HCT116 (cell line): ENCODE measurements at regions of chr7 and their contacts with region 1.

Region 1: DNA sequence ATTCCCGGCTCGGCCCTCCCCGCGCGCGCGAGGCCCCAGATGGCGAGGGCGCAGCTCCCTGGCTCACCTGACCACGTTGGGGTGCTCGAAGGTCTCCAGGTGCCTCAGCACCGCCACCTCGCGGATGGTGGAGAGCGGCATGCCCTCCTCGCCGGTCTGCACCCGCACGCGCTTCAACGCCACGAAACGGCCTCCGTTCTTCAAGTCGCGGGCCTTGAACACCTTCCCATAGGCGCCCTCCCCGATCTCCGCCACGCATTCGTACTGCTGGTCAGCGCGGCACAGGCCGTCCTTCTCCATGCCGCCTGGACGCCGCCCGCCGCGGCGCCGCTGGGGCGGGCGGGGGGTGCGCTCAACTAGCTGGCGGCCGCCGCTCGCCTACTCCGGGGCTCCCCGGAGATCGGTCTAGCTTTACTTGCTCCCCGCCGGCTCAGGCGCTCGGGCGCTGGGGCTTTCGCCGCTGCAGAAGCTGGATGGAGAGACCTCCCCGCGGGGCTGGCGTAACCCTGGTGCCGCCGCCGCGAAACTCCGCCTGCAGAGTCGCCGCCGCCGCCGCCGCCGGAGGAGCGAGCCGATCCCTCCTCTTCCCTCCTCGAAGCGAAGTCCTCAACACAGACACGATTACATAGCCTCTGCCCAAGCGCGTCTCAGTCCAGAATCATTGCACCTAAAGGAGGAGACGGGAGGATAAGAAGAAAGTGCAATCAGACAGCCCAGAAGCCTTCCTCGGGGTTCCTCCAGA is 3.2 kb downstream of the CDK6 start:
- DNase-seq: peak; percentile 70
- ATAC-seq: peak; percentile 67
- H3K4me3 ChIP-seq: peak overlapping the region; percentile 65 to 77
- H3K27ac ChIP-seq: peak overlapping the region; percentile 87
- H3K4me1 ChIP-seq: peaks cover 12 to 43% of the 10 kb centered on the region in 2 experiments
- H3K27me3 ChIP-seq: no peaks in the 10 kb centered on the region
- CTCF ChIP-seq: peak; percentile 74 to 87 (median 81)
- POLR2A ChIP-seq: no peak
- RAD21 ChIP-seq: peak; percentile 91

Region 2: GRCh38 chr7:92528188-92528957 is 304.8 kb before region 1 on chr7 and contains the starts of genes PEX1 and RBM48:
- CTCF ChIA-PET with region 1: no interaction called
- POLR2A ChIA-PET with region 1: no interaction called
- RAD21 ChIA-PET with region 1: no interaction called
- intact Hi-C with region 1: loop called (anchors 5 kb)
- DNase-seq: peak; percentile 99
- ATAC-seq: peak; percentile 95
- H3K4me3 ChIP-seq: peak within 1 kb of the TSS; percentile 83 to 85
- H3K27ac ChIP-seq: peak within 1 kb of the TSS; percentile 79
- H3K4me1 ChIP-seq: peaks cover 5 to 12% of the 10 kb centered on the region in 2 experiments; a peak in 3 of 4 replicates
- H3K27me3 ChIP-seq: no peaks in the 10 kb centered on the region
- CTCF ChIP-seq: peak in 2 of 3 experiments; percentile 12 to 53; a peak in 2 of 6 replicates
- POLR2A ChIP-seq: no peak
- RAD21 ChIP-seq: no peak
- total RNA-seq, gene PEX1: 13.1 TPM
- total RNA-seq, gene RBM48: 14.6 TPM

Region 3: GRCh38 chr7:92621026-92621540 is 212.1 kb before region 1 on chr7:
- CTCF ChIA-PET with region 1: interaction called, 13 read pairs
- POLR2A ChIA-PET with region 1: no interaction called
- RAD21 ChIA-PET with region 1: no interaction called
- intact Hi-C with region 1: loop called (anchors 1 kb)
- DNase-seq: peak; percentile 53
- ATAC-seq: peak; percentile 81
- H3K4me3 ChIP-seq: no peak overlapping the region
- H3K27ac ChIP-seq: peak overlapping the region; percentile 1; the same call in 1 of the 2 replicates
- H3K4me1 ChIP-seq: peaks cover 3 to 28% of the 10 kb centered on the region in 2 experiments; a peak in 3 of 4 replicates
- H3K27me3 ChIP-seq: no peaks in the 10 kb centered on the region
- CTCF ChIP-seq: peak; percentile 58 to 83 (median 73)
- POLR2A ChIP-seq: no peak
- RAD21 ChIP-seq: peak; percentile 95

Region 4: GRCh38 chr7:92751902-92752901 is 81.0 kb before region 1 on chr7:
- CTCF ChIA-PET with region 1: no interaction called
- POLR2A ChIA-PET with region 1: no interaction called
- RAD21 ChIA-PET with region 1: no interaction called
- intact Hi-C with region 1: loop called (anchors 5 kb)
- DNase-seq: peak; percentile 77
- ATAC-seq: peak; percentile 92
- H3K4me3 ChIP-seq: peak overlapping the region in 1 of 2 experiments; percentile 43; a peak in 1 of 4 replicates
- H3K27ac ChIP-seq: peak overlapping the region; percentile 58; the same call in 1 of the 2 replicates
- H3K4me1 ChIP-seq: peaks cover 22 to 82% of the 10 kb centered on the region in 2 experiments
- H3K27me3 ChIP-seq: no peaks in the 10 kb centered on the region
- CTCF ChIP-seq: no peak
- POLR2A ChIP-seq: no peak
- RAD21 ChIP-seq: no peak

Region 5: GRCh38 chr7:93043385-93043985 is 210.3 kb after region 1 on chr7:
- CTCF ChIA-PET with region 1: no interaction called
- POLR2A ChIA-PET with region 1: no interaction called
- RAD21 ChIA-PET with region 1: no interaction called
- intact Hi-C with region 1: loop called (anchors 5 kb)
- DNase-seq: peak; percentile 32
- ATAC-seq: peak; percentile 93
- H3K4me3 ChIP-seq: peak overlapping the region; percentile 37 to 45
- H3K27ac ChIP-seq: no peak overlapping the region
- H3K4me1 ChIP-seq: peaks cover 0 to 12% of the 10 kb centered on the region in 2 experiments; a peak in 2 of 4 replicates
- H3K27me3 ChIP-seq: no peaks in the 10 kb centered on the region
- CTCF ChIP-seq: no peak
- POLR2A ChIP-seq: no peak
- RAD21 ChIP-seq: no peak